OCI-LY7 (cell line): ENCODE measurements at regions of chr1 and their contacts with region 1.

Region 1: GRCh38 chr1:93672069-93672468 is 9.6 kb downstream of the BCAR3 start:
- DNase-seq: no peak
- H3K4me3 ChIP-seq: no peak overlapping the region
- H3K27ac ChIP-seq: no peak overlapping the region
- H3K4me1 ChIP-seq: no peaks in the 10 kb centered on the region
- CTCF ChIP-seq: no peak

Region 2: GRCh38 chr1:93661829-93662474 is 10.1 kb before region 1 on chr1:
- CTCF ChIA-PET with region 1: no interaction called
- POLR2A ChIA-PET with region 1: interaction called, 22 read pairs
- intact Hi-C with region 1: no loop called
- DNase-seq: no peak
- H3K4me3 ChIP-seq: no peak overlapping the region
- H3K27ac ChIP-seq: no peak overlapping the region
- H3K4me1 ChIP-seq: no peaks in the 10 kb centered on the region
- CTCF ChIP-seq: no peak